ENCODE measurements at regions of chr6 and their contacts with region 1.

Region 1: GRCh38 chr6:138765896-138766655 is 7.5 kb upstream of the CCDC28A start:
- DNase-seq: no peak
- H3K4me3 ChIP-seq: no peak overlapping the region
- H3K27ac ChIP-seq: no peak overlapping the region
- H3K27me3 ChIP-seq: no peaks in the 10 kb centered on the region
- CTCF ChIP-seq: peak; percentile 47 to 88 (median 74)

Region 2: DNA sequence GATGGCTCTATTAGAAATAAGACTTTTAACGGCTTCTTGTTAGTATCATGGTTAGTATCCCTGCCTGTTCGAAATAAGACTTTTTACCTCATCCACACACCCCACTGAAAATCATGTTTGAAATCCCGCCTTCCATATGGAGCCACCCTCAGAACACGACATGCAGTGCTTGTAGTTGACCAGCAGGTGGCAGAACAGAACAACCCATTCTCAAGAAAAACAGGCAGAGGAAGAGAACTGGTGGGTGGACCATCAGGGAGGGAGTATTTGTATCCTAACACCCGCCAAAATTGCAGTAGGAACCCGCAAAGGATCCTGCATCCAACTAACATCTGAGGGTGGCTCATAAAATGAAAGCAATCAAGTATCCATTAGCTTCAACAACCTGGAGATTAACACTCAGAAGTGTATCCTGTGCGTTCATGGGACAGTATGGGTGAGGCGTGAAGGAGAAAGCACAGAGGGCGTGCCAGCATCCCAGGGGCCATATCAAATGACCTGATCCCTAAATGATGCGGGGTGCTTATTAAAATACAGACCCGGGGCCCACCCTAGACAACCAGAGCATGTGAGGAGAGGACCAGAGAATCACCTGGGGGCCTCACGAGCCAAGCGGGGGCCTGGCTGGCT is 177.2 kb before region 1 on chr6:
- intact Hi-C with region 1: loop called (anchors 2 kb)
- DNase-seq: peak in 7 of 10 donors; percentile 47 to 64 (median 56)
- H3K4me3 ChIP-seq: no peak overlapping the region
- H3K27ac ChIP-seq: no peak overlapping the region
- H3K27me3 ChIP-seq: peaks cover 0 to 3% (median 0%) of the 10 kb centered on the region in 45 donors
- CTCF ChIP-seq: peak; percentile 80 to 99 (median 95)

Region 3: GRCh38 chr6:138654715-138655634 is 111.1 kb before region 1 on chr6:
- intact Hi-C with region 1: no loop called
- DNase-seq: no peak
- H3K4me3 ChIP-seq: peak overlapping the region in 6 of 59 donors; percentile 1 to 18 (median 7)
- H3K27ac ChIP-seq: peak overlapping the region in 16 of 59 donors; percentile 4 to 73 (median 40)
- H3K27me3 ChIP-seq: peaks cover 0 to 4% (median 0%) of the 10 kb centered on the region in 45 donors
- CTCF ChIP-seq: no peak

Region 4: GRCh38 chr6:138912308-138912707 is 146.2 kb after region 1 on chr6:
- intact Hi-C with region 1: no loop called
- DNase-seq: no peak
- H3K4me3 ChIP-seq: no peak overlapping the region
- H3K27ac ChIP-seq: no peak overlapping the region
- H3K27me3 ChIP-seq: no peaks in the 10 kb centered on the region
- CTCF ChIP-seq: no peak